ENCODE measurements at regions of chr14 and their contacts with region 1.

Region 1: GRCh38 chr14:54347997-54348611 is 48.7 kb upstream of the CDKN3 start:
- DNase-seq: peak; percentile 47
- ATAC-seq: peak; percentile 71
- H3K4me3 ChIP-seq: no peak overlapping the region
- H3K27ac ChIP-seq: no peak overlapping the region
- H3K4me1 ChIP-seq: peaks cover 5% of the 10 kb centered on the region; the same call in 1 of the 2 replicates
- H3K27me3 ChIP-seq: 0 out of 2 replicates have a peak, but pooled peaks cover 2% of the 10 kb centered on the region
- CTCF ChIP-seq: peak; percentile 77
- POLR2A ChIP-seq: no peak
- RAD21 ChIP-seq: peak; percentile 84

Region 2: GRCh38 chr14:53044486-53044885 is 1303.6 kb before region 1 on chr14:
- CTCF ChIA-PET with region 1: no interaction called
- POLR2A ChIA-PET with region 1: no interaction called
- dilution Hi-C with region 1: no loop called
- in situ Hi-C with region 1: no loop called
- intact Hi-C with region 1: loop called (anchors 10 kb)
- DNase-seq: peak; percentile 91
- ATAC-seq: peak; percentile 70
- H3K4me3 ChIP-seq: no peak overlapping the region
- H3K27ac ChIP-seq: peak overlapping the region; percentile 82
- H3K4me1 ChIP-seq: peaks cover 19% of the 10 kb centered on the region
- H3K27me3 ChIP-seq: no peaks in the 10 kb centered on the region
- CTCF ChIP-seq: no peak
- POLR2A ChIP-seq: no peak
- RAD21 ChIP-seq: no peak

Region 3: DNA sequence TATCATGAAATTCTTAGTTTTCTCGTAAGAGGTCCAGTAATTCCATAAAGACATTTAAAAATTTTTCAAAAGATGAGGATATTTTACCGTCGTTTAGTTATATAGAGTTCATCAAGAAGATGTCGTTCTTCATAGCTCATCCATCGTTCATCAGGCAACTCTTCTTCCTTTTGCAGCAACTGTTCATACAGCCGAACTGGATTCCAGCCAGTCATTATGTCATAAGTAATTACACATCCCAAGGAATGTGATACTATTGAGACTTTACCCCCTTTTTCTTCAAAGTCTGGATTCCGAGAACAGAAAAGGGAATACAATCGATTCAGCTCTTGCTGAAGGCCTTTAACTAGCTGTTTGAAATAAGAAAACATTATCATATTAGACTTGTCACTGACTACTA is 1285.2 kb before region 1 on chr14:
- CTCF ChIA-PET with region 1: no interaction called
- POLR2A ChIA-PET with region 1: no interaction called
- dilution Hi-C with region 1: no loop called
- in situ Hi-C with region 1: no loop called
- intact Hi-C with region 1: loop called (anchors 5 kb)
- DNase-seq: peak; percentile 70
- ATAC-seq: peak; percentile 35; the same call in 1 of the 2 replicates
- H3K4me3 ChIP-seq: no peak overlapping the region
- H3K27ac ChIP-seq: no peak overlapping the region
- H3K4me1 ChIP-seq: no peaks in the 10 kb centered on the region
- H3K27me3 ChIP-seq: no peaks in the 10 kb centered on the region
- CTCF ChIP-seq: no peak
- POLR2A ChIP-seq: no peak
- RAD21 ChIP-seq: no peak

Region 4: DNA sequence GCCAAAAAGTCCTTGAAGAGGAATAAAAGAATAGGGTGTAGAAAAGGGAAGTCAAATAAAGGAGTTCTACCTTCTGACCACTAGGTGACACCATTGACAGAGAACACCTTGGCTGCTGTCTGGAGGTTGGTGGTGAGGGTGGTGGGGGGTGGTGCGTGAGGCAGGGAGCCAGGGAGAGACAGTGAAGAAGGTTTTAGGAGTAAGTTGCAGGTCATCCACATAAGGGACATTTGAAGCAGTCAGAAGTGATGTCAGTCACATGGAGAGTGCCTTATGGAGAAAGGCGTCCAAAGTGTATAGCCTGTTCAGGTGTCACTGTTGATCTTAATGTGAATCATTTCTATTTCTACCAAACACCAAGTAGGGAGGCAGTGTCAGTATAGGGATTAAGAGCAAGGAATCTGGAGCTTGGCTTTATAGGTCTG is 915.7 kb before region 1 on chr14:
- CTCF ChIA-PET with region 1: no interaction called
- POLR2A ChIA-PET with region 1: no interaction called
- dilution Hi-C with region 1: no loop called
- in situ Hi-C with region 1: loop called (anchors 25 kb)
- intact Hi-C with region 1: loop called (anchors 10 kb)
- DNase-seq: peak; percentile 60
- ATAC-seq: peak; percentile 94
- H3K4me3 ChIP-seq: no peak overlapping the region
- H3K27ac ChIP-seq: peak overlapping the region; percentile 3; the same call in 1 of the 2 replicates
- H3K4me1 ChIP-seq: peaks cover 6% of the 10 kb centered on the region
- H3K27me3 ChIP-seq: no peaks in the 10 kb centered on the region
- CTCF ChIP-seq: peak; percentile 71
- POLR2A ChIP-seq: no peak
- RAD21 ChIP-seq: peak; percentile 83

Region 5: DNA sequence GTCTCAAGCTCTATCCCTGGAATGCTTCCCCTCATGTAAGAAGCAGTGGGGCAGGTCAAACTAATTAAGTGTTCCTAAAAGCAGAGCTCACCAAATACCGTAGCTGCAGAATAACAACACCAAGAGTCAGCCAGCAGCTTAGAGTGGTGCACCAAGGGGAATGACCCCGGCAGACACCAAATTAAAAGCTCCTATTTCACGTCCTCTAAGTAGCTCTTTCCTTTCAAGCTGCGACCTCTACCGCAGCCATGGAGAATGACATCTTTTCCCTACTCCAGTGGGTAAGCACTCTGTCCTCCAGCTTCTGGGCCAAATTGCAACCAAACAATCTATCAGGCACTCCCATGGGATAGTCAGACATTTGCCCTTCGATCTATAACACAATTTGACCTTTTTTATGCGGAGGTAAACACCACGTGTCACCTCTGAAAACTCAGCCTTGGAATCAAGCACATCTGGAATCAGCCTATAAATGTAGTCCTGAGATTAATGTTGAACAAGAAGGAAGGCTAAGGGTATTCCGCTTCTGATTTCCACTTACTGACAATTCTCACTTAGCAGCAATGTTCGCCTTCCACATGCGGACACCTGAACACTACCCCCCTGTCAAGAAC is 18.9 kb before region 1 on chr14:
- CTCF ChIA-PET with region 1: interaction called, 10 read pairs
- POLR2A ChIA-PET with region 1: no interaction called
- dilution Hi-C with region 1: no loop called
- in situ Hi-C with region 1: no loop called
- intact Hi-C with region 1: no loop called
- DNase-seq: peak; percentile 61
- ATAC-seq: peak; percentile 99
- H3K4me3 ChIP-seq: no peak overlapping the region
- H3K27ac ChIP-seq: no peak overlapping the region
- H3K4me1 ChIP-seq: no peaks in the 10 kb centered on the region
- H3K27me3 ChIP-seq: peaks cover 12% of the 10 kb centered on the region
- CTCF ChIP-seq: peak; percentile 79
- POLR2A ChIP-seq: no peak
- RAD21 ChIP-seq: peak; percentile 86

Region 6: GRCh38 chr14:55245657-55246268 is 897.7 kb after region 1 on chr14:
- CTCF ChIA-PET with region 1: no interaction called
- POLR2A ChIA-PET with region 1: no interaction called
- dilution Hi-C with region 1: no loop called
- in situ Hi-C with region 1: no loop called
- intact Hi-C with region 1: no loop called
- DNase-seq: peak; percentile 42
- ATAC-seq: 0 out of 2 replicates have a peak, but pooled peaks have one; percentile 35
- H3K4me3 ChIP-seq: no peak overlapping the region
- H3K27ac ChIP-seq: no peak overlapping the region
- H3K4me1 ChIP-seq: peaks cover 2% of the 10 kb centered on the region; the same call in 1 of the 2 replicates
- H3K27me3 ChIP-seq: peaks cover 24% of the 10 kb centered on the region
- CTCF ChIP-seq: peak; percentile 64
- POLR2A ChIP-seq: no peak
- RAD21 ChIP-seq: peak; percentile 59